ENCODE measurements at regions of chr17 and their contacts with region 1.

Region 1: GRCh38 chr17:47229535-47230443 is 20.6 kb downstream of the MYL4 start:
- DNase-seq: peak; percentile 85
- ATAC-seq: peak; percentile 91
- H3K4me3 Mint-ChIP-seq: no peak overlapping the region
- H3K27ac Mint-ChIP-seq: peak overlapping the region; percentile 6
- H3K4me1 Mint-ChIP-seq: peaks cover 14% of the 10 kb centered on the region
- H3K27me3 Mint-ChIP-seq: peaks cover 24% of the 10 kb centered on the region
- CTCF ChIP-seq: peak; percentile 91

Region 2: GRCh38 chr17:47192554-47192953 is 37.2 kb before region 1 on chr17:
- CTCF ChIA-PET with region 1: no interaction called
- POLR2A ChIA-PET with region 1: no interaction called
- DNase-seq: no peak
- ATAC-seq: no peak
- H3K4me3 Mint-ChIP-seq: no peak overlapping the region
- H3K27ac Mint-ChIP-seq: no peak overlapping the region
- H3K4me1 Mint-ChIP-seq: peaks cover 11% of the 10 kb centered on the region; the same call in 1 of the 2 replicates
- H3K27me3 Mint-ChIP-seq: peaks cover 3% of the 10 kb centered on the region; the same call in 1 of the 2 replicates
- CTCF ChIP-seq: no peak

Region 3: GRCh38 chr17:47239619-47240374 is 10.0 kb after region 1 on chr17:
- CTCF ChIA-PET with region 1: no interaction called
- POLR2A ChIA-PET with region 1: no interaction called
- DNase-seq: no peak
- ATAC-seq: peak; percentile 30; the same call in 1 of the 2 replicates
- H3K4me3 Mint-ChIP-seq: no peak overlapping the region
- H3K27ac Mint-ChIP-seq: 0 out of 2 replicates have a peak overlapping the region, but pooled peaks have one; percentile 6
- H3K4me1 Mint-ChIP-seq: 0 out of 2 replicates have a peak, but pooled peaks cover 4% of the 10 kb centered on the region
- H3K27me3 Mint-ChIP-seq: no peaks in the 10 kb centered on the region
- CTCF ChIP-seq: no peak

Region 4: GRCh38 chr17:47315451-47316266 is 85.9 kb after region 1 on chr17:
- CTCF ChIA-PET with region 1: interaction called, 24 read pairs
- POLR2A ChIA-PET with region 1: no interaction called
- DNase-seq: no peak
- ATAC-seq: peak; percentile 81
- H3K4me3 Mint-ChIP-seq: no peak overlapping the region
- H3K27ac Mint-ChIP-seq: no peak overlapping the region
- H3K4me1 Mint-ChIP-seq: 0 out of 2 replicates have a peak, but pooled peaks cover 2% of the 10 kb centered on the region
- H3K27me3 Mint-ChIP-seq: peaks cover 1% of the 10 kb centered on the region; the same call in 1 of the 2 replicates
- CTCF ChIP-seq: peak; percentile 57; the same call in 1 of the 2 replicates